Activated CD4-positive, alpha-beta T cell treated with anti-CD3 and anti-CD28 coated beads for 36 hours (primary cell): ENCODE measurements at regions of chr18 and their contacts with region 1.

Region 1: GRCh38 chr18:62425465-62426195 is 97.2 kb upstream of the ZCCHC2 start:
- DNase-seq: peak; percentile 75
- ATAC-seq: peak; percentile 50
- H3K4me3 Mint-ChIP-seq: no peak overlapping the region
- H3K27ac Mint-ChIP-seq: peak overlapping the region; percentile 81
- H3K4me1 Mint-ChIP-seq: peaks cover 31% of the 10 kb centered on the region
- H3K27me3 Mint-ChIP-seq: peaks cover 4% of the 10 kb centered on the region

Region 2: DNA sequence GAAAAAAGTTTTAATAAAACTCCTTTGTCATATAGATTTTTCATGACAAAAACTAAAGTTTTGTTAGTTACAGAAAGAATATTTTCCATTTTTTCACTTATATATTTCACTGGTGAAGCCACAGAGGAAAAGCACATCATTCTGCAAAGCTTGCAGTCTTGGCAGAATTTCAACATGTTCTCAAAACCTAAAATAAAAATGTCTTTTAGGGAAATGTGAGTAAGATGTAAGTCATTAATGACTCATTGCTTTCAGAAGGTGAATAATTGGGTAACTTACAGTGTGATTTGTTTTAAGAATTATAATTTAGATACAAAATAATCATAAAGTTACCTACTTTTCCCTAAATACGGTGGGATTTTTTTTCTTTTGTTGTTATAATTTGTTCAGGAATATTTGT is 143.9 kb before region 1 on chr18:
- CTCF ChIA-PET with region 1: no interaction called
- POLR2A ChIA-PET with region 1: no interaction called
- intact Hi-C with region 1: loop called in 1 of 2 experiments (anchors 2 kb)
- DNase-seq: no peak
- ATAC-seq: peak; percentile 52
- H3K4me3 Mint-ChIP-seq: no peak overlapping the region
- H3K27ac Mint-ChIP-seq: no peak overlapping the region
- H3K4me1 Mint-ChIP-seq: peaks cover 32% of the 10 kb centered on the region
- H3K27me3 Mint-ChIP-seq: no peaks in the 10 kb centered on the region

Region 3: GRCh38 chr18:62399781-62400308 is 25.8 kb before region 1 on chr18:
- CTCF ChIA-PET with region 1: interaction called, 9 read pairs
- POLR2A ChIA-PET with region 1: no interaction called
- intact Hi-C with region 1: loop called (anchors 1 to 2 kb)
- DNase-seq: peak; percentile 11
- ATAC-seq: peak; percentile 21
- H3K4me3 Mint-ChIP-seq: no peak overlapping the region
- H3K27ac Mint-ChIP-seq: no peak overlapping the region
- H3K4me1 Mint-ChIP-seq: peaks cover 32% of the 10 kb centered on the region
- H3K27me3 Mint-ChIP-seq: peaks cover 4% of the 10 kb centered on the region

Region 4: GRCh38 chr18:62522504-62523254 is 97.0 kb after region 1 on chr18 and contains the start of gene ZCCHC2:
- CTCF ChIA-PET with region 1: interaction called, 8 read pairs
- POLR2A ChIA-PET with region 1: interaction called, 8 read pairs
- intact Hi-C with region 1: loop called (anchors 1 kb)
- DNase-seq: peak; percentile 99
- ATAC-seq: peak; percentile 82
- H3K4me3 Mint-ChIP-seq: peak within 1 kb of the TSS; percentile 95
- H3K27ac Mint-ChIP-seq: peak within 1 kb of the TSS; percentile 94
- H3K4me1 Mint-ChIP-seq: peaks cover 19% of the 10 kb centered on the region
- H3K27me3 Mint-ChIP-seq: no peaks in the 10 kb centered on the region
- total RNA-seq, gene ZCCHC2: 26.1 to 40.1 TPM

Region 5: GRCh38 chr18:62714671-62715435 is 289.2 kb after region 1 on chr18:
- CTCF ChIA-PET with region 1: no interaction called
- POLR2A ChIA-PET with region 1: no interaction called
- intact Hi-C with region 1: loop called in 1 of 2 experiments (anchors 1 kb)
- DNase-seq: peak; percentile 95
- ATAC-seq: peak; percentile 81
- H3K4me3 Mint-ChIP-seq: peak overlapping the region; percentile 81
- H3K27ac Mint-ChIP-seq: peak overlapping the region; percentile 69
- H3K4me1 Mint-ChIP-seq: peaks cover 28% of the 10 kb centered on the region
- H3K27me3 Mint-ChIP-seq: no peaks in the 10 kb centered on the region

Region 6: DNA sequence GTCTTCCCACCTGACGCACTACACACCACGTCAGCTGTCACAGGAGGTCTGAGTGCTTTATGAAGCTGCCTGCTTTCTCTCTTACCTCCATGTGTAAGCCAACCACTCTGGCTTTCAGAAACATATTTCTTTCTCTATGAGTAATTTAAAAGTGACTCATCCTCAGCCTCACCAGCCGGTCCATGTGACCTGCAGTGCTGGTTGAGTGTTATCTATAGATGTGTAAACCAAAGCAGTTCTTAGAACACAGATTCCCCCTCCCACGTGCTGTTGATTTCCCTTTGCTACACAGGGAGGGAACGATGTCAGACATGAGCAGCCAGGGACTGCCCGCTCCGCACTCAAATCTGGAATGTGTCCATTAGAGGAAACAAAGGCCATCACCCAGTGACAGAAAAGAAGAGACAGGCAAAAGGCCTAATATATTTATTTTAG is 736.1 kb after region 1 on chr18:
- CTCF ChIA-PET with region 1: no interaction called
- POLR2A ChIA-PET with region 1: no interaction called
- intact Hi-C with region 1: loop called in 1 of 2 experiments (anchors 1 kb)
- DNase-seq: peak; percentile 90
- ATAC-seq: peak; percentile 79
- H3K4me3 Mint-ChIP-seq: peak overlapping the region; percentile 73
- H3K27ac Mint-ChIP-seq: peak overlapping the region; percentile 95
- H3K4me1 Mint-ChIP-seq: peaks cover 78% of the 10 kb centered on the region
- H3K27me3 Mint-ChIP-seq: no peaks in the 10 kb centered on the region